Sigmoid colon (tissue), 7 donors: ENCODE measurements at regions of chr9 and their contacts with region 1.

Region 1: GRCh38 chr9:84397151-84397728 is 56.7 kb upstream of the SLC28A3 start:
- DNase-seq: peak; percentile 73
- H3K4me3 ChIP-seq: no peak overlapping the region
- H3K27ac ChIP-seq: no peak overlapping the region
- H3K4me1 ChIP-seq: no peaks in the 10 kb centered on the region
- H3K27me3 ChIP-seq: peaks cover 0 to 4% (median 0%) of the 10 kb centered on the region in 3 donors
- CTCF ChIP-seq: peak; percentile 61 to 92 (median 80)
- EP300 ChIP-seq: no peak
- POLR2A ChIP-seq: no peak

Region 2: GRCh38 chr9:84955971-84956370 is 558.7 kb after region 1 on chr9:
- intact Hi-C with region 1: loop called (anchors 2 kb)
- DNase-seq: no peak
- H3K4me3 ChIP-seq: no peak overlapping the region
- H3K27ac ChIP-seq: no peak overlapping the region
- H3K4me1 ChIP-seq: peaks cover 0 to 4% (median 0%) of the 10 kb centered on the region in 4 donors
- H3K27me3 ChIP-seq: no peaks in the 10 kb centered on the region
- CTCF ChIP-seq: no peak
- EP300 ChIP-seq: no peak
- POLR2A ChIP-seq: no peak

Region 3: GRCh38 chr9:85610074-85610860 is 1213.0 kb after region 1 on chr9:
- intact Hi-C with region 1: loop called (anchors 2 kb)
- DNase-seq: no peak
- H3K4me3 ChIP-seq: peak overlapping the region in 3 of 4 donors; percentile 17 to 35 (median 24)
- H3K27ac ChIP-seq: no peak overlapping the region
- H3K4me1 ChIP-seq: no peaks in the 10 kb centered on the region
- H3K27me3 ChIP-seq: no peaks in the 10 kb centered on the region
- CTCF ChIP-seq: peak; percentile 43 to 80 (median 68)
- EP300 ChIP-seq: no peak
- POLR2A ChIP-seq: no peak